SK-N-SH (cell line): ENCODE measurements at regions of chr16 and their contacts with region 1.

Region 1: GRCh38 chr16:20300312-20301097 is 26.8 kb downstream of the GP2 start:
- DNase-seq: peak; percentile 67
- H3K4me3 ChIP-seq: peak overlapping the region in 1 of 2 experiments; percentile 12; a peak in 1 of 4 replicates
- H3K27ac ChIP-seq: no peak overlapping the region
- H3K4me1 ChIP-seq: no peaks in the 10 kb centered on the region; a peak in 1 of 4 replicates
- H3K27me3 ChIP-seq: no peaks in the 10 kb centered on the region
- CTCF ChIP-seq: peak; percentile 77
- EP300 ChIP-seq: no peak
- RAD21 ChIP-seq: peak; percentile 81

Region 2: GRCh38 chr16:19980632-19981265 is 319.8 kb before region 1 on chr16:
- CTCF ChIA-PET with region 1: interaction called, 15 read pairs
- POLR2A ChIA-PET with region 1: no interaction called
- DNase-seq: peak; percentile 41
- H3K4me3 ChIP-seq: no peak overlapping the region
- H3K27ac ChIP-seq: no peak overlapping the region
- H3K4me1 ChIP-seq: no peaks in the 10 kb centered on the region
- H3K27me3 ChIP-seq: no peaks in the 10 kb centered on the region
- CTCF ChIP-seq: peak; percentile 58
- EP300 ChIP-seq: no peak
- RAD21 ChIP-seq: peak; percentile 26; the same call in 1 of the 2 replicates

Region 3: DNA sequence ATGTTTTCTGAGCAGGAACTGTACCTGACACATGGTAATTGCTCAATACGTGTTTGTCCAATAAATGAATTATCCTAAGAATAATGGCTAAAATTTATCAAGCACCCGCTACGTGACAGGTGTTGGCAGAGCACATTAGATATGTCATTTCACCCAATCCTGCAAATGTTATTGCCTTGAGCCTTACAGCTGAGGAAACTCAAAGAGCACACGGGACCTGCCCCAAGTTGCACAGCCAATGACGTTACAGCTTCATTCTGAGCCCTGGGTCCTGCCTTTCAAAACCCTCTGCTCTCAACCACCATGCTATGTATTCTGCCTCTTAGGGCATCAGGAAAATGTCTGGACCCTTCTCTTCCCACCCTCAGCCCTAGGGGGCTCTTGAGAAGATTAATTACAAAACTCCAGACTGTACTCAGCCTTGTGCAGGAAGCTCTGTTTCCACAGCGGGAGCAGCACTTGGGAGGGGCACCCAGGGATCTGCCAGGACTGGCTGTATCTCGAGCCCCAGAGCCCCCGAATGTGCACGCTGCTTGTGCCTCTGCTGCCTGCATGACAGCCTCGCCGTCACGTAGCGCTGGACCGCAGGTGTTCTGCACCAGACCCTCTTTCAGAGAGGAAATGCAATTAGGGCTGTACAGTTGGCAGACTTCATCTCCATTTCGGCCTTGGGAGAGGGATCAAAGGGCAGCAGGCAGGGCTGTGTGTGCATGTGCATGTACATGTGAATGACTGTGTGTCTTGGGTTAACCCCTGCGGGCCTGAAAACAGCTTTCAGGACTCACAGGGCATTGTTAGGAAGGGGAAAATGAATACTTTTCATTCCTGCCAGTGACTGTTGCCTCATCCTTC is 298.4 kb before region 1 on chr16:
- CTCF ChIA-PET with region 1: interaction called, 11 read pairs
- POLR2A ChIA-PET with region 1: interaction called, 3 read pairs
- DNase-seq: peak; percentile 48
- H3K4me3 ChIP-seq: no peak overlapping the region
- H3K27ac ChIP-seq: peak overlapping the region in 1 of 2 experiments; percentile 83; a peak in 2 of 4 replicates
- H3K4me1 ChIP-seq: peaks cover 0 to 22% of the 10 kb centered on the region in 2 experiments; a peak in 1 of 4 replicates
- H3K27me3 ChIP-seq: no peaks in the 10 kb centered on the region
- CTCF ChIP-seq: no peak
- EP300 ChIP-seq: peak in 1 of 2 experiments; percentile 51; a peak in 1 of 4 replicates
- RAD21 ChIP-seq: no peak

Region 4: GRCh38 chr16:20280259-20280658 is 20.2 kb before region 1 on chr16:
- CTCF ChIA-PET with region 1: interaction called, 10 read pairs
- POLR2A ChIA-PET with region 1: no interaction called
- DNase-seq: no peak
- H3K4me3 ChIP-seq: no peak overlapping the region
- H3K27ac ChIP-seq: no peak overlapping the region
- H3K4me1 ChIP-seq: no peaks in the 10 kb centered on the region; a peak in 1 of 4 replicates
- H3K27me3 ChIP-seq: no peaks in the 10 kb centered on the region
- CTCF ChIP-seq: no peak
- EP300 ChIP-seq: no peak
- RAD21 ChIP-seq: no peak

Region 5: DNA sequence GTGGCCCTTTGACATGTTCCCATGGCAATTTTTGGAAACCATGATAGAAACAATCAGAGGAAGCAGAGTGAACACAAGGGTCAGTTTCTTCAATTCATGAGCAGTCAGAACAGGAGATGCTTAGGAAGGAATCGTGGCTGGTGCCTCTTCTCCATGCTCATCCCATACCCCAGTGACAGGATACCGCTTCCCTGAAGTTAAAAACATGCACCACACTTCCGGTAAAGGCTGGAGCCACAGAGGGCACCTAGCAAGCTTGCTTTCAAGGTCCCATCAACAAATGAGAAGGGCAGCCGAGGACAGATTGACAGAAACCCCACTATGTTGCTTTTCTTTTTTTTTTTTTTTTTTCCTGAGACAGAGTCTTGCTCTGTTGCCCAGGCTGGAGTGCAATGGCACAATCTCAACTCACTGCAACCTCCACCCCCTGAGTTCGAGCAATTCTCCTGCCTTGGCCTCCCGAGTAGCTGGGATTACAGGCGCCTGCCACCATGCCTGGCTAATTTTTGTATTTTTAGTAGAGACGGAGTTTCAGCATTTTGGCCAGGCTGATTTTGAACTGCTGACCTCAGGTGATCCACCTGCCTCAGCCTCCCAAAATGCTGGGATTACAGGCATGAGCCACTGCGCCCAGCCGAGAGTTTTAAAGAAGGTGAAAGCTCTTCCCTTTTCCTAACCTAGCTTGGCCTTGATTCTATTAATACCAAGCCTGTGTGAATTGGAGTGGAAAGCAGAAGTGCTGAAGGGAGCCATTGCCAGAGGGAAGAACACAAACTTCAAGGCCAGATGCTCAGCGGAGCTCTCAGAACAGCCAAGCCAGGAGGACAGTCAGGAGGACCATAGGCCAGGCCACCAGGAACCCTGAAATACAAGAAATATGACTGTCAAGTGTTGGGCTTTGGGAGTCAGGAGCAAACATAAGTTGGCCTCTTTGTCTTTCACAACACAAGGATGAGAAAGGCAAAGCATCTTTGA is 10.2 kb after region 1 on chr16:
- CTCF ChIA-PET with region 1: interaction called, 32 read pairs
- POLR2A ChIA-PET with region 1: no interaction called
- DNase-seq: no peak
- H3K4me3 ChIP-seq: no peak overlapping the region
- H3K27ac ChIP-seq: no peak overlapping the region
- H3K4me1 ChIP-seq: no peaks in the 10 kb centered on the region
- H3K27me3 ChIP-seq: no peaks in the 10 kb centered on the region
- CTCF ChIP-seq: no peak
- EP300 ChIP-seq: no peak
- RAD21 ChIP-seq: no peak

Region 6: DNA sequence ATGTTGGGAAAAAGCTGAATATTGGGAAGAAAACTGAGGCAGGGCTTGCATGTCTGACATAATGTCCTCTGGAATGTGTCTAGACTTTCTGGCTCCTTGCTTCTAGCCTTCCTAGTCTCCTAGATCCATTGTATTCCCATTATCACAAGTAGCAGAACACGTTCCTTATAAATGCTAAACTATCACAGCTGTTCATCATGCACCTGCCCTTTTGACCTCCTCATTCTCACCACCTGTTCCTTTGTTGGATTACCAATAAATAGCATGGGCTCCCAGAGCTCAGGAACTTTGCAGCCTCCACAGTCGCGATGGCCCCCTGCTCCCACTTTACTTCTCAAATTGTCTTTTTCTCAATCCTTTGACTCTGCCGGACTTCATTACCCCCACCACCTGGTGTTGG is 347.2 kb after region 1 on chr16:
- CTCF ChIA-PET with region 1: no interaction called
- POLR2A ChIA-PET with region 1: no interaction called
- DNase-seq: no peak
- H3K4me3 ChIP-seq: no peak overlapping the region
- H3K27ac ChIP-seq: no peak overlapping the region
- H3K4me1 ChIP-seq: no peaks in the 10 kb centered on the region
- H3K27me3 ChIP-seq: no peaks in the 10 kb centered on the region
- CTCF ChIP-seq: no peak
- EP300 ChIP-seq: no peak
- RAD21 ChIP-seq: no peak